MCF 10A (cell line): ENCODE measurements at regions of chr12 and their contacts with region 1.

Region 1: DNA sequence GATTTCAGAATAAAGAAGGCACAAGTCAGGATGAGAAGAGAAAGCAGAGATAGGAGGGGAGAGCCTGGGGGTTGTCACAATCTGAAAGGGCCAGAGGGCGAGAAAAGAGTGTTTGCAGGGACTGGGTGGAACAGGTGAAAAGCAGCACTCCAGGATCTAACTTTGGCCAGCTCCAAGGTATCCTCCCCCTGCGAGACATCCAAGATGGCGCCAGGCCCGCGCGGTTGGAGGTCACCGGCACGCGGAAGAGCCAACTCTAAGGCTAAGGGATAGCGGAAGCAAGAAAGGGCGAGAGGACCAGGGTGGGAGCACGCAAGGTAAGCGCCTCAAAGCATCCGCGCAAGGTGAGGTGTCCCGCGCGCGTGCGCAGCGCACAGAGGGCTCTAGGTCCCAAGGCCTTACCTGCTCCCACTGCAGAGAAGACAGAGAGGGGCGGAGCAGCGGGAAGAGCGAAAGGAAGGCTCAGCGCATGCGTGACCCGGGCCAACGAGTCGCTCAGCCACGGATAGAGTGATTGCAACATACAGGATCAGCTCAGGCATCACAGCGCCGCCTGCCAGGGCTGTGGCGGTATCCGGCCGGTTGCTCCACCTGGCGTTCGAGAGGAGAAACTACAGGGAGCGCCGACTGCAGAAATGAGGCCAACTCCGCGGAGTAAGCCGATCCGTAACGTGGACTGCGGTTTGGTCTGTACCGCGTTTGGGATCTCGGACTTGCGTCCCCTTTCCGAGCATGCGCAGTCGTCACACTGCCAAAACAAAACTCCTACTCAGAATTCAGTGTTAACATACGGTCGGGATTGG is at the start of gene ATP5MC2:
- DNase-seq: peak; percentile 98
- H3K4me3 Mint-ChIP-seq: peak within 1 kb of the TSS; percentile 83
- H3K27ac Mint-ChIP-seq: peak within 1 kb of the TSS; percentile 80
- H3K4me1 Mint-ChIP-seq: peaks cover 10% of the 10 kb centered on the region
- H3K27me3 Mint-ChIP-seq: peaks cover 12% of the 10 kb centered on the region
- CTCF ChIP-seq: peak; percentile 97
- total RNA-seq, gene ATP5MC2: 328 and 381 TPM in 2 replicates

Region 2: GRCh38 chr12:53500776-53501614 is 174.9 kb before region 1 on chr12 and contains the start of gene TARBP2:
- CTCF ChIA-PET with region 1: interaction called, 3 read pairs
- POLR2A ChIA-PET with region 1: interaction called, 11 read pairs
- intact Hi-C with region 1: no loop called
- DNase-seq: peak; percentile 99
- H3K4me3 Mint-ChIP-seq: peak within 1 kb of the TSS; percentile 80
- H3K27ac Mint-ChIP-seq: peak within 1 kb of the TSS; percentile 93
- H3K4me1 Mint-ChIP-seq: peaks cover 36% of the 10 kb centered on the region
- H3K27me3 Mint-ChIP-seq: no peaks in the 10 kb centered on the region
- CTCF ChIP-seq: no peak
- total RNA-seq, gene TARBP2: 26.4 and 27.8 TPM in 2 replicates

Region 3: DNA sequence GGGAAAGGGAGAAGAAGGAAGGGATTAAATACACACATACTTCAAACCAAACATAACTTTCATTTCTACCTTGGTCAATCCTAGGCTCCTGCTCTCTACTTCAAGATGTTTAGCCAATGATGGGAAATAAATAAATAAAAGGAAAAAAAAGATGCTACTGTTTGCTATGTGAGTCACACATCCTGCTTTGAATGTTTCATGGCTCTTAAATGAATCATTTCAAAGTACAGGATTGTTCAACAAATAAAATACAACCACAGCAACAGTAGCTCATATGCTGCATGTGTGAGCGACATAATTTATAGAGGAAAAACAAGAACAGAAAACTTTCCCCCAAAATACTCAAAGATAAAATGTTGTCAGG is 114.3 kb before region 1 on chr12:
- CTCF ChIA-PET with region 1: interaction called, 3 read pairs
- POLR2A ChIA-PET with region 1: interaction called, 10 read pairs
- intact Hi-C with region 1: no loop called
- DNase-seq: peak; percentile 83
- H3K4me3 Mint-ChIP-seq: peak overlapping the region; percentile 52
- H3K27ac Mint-ChIP-seq: peak overlapping the region; percentile 90
- H3K4me1 Mint-ChIP-seq: peaks cover 49% of the 10 kb centered on the region
- H3K27me3 Mint-ChIP-seq: no peaks in the 10 kb centered on the region
- CTCF ChIP-seq: no peak

Region 4: DNA sequence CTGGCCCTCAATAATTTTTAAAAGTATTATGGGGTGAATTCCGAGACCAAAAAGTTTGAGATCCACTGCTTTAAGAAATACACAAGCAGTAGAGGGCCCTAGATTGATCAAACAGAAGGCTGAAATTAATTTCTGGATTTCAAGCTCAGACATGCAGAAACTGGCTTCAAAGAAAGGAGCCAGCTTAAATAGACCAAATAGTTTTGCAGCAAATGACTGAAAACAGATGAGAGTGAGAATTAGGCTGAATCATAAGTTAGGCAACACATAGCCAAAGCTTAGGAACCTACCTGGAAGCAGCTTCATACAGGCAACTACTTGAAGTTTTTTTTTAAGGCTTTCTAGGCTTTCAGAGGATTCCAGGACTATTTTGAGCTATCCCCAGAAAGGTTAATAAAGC is 62.0 kb before region 1 on chr12:
- CTCF ChIA-PET with region 1: interaction called, 10 read pairs
- POLR2A ChIA-PET with region 1: interaction called, 25 read pairs
- intact Hi-C with region 1: no loop called
- DNase-seq: peak; percentile 58
- H3K4me3 Mint-ChIP-seq: no peak overlapping the region
- H3K27ac Mint-ChIP-seq: peak overlapping the region; percentile 74
- H3K4me1 Mint-ChIP-seq: peaks cover 17% of the 10 kb centered on the region
- H3K27me3 Mint-ChIP-seq: no peaks in the 10 kb centered on the region
- CTCF ChIP-seq: no peak

Region 5: GRCh38 chr12:53659011-53659551 is 16.8 kb before region 1 on chr12:
- CTCF ChIA-PET with region 1: interaction called, 5 read pairs
- POLR2A ChIA-PET with region 1: interaction called, 17 read pairs
- intact Hi-C with region 1: no loop called
- DNase-seq: peak; percentile 77
- H3K4me3 Mint-ChIP-seq: no peak overlapping the region
- H3K27ac Mint-ChIP-seq: peak overlapping the region; percentile 82
- H3K4me1 Mint-ChIP-seq: peaks cover 16% of the 10 kb centered on the region
- H3K27me3 Mint-ChIP-seq: no peaks in the 10 kb centered on the region
- CTCF ChIP-seq: no peak

Region 6: DNA sequence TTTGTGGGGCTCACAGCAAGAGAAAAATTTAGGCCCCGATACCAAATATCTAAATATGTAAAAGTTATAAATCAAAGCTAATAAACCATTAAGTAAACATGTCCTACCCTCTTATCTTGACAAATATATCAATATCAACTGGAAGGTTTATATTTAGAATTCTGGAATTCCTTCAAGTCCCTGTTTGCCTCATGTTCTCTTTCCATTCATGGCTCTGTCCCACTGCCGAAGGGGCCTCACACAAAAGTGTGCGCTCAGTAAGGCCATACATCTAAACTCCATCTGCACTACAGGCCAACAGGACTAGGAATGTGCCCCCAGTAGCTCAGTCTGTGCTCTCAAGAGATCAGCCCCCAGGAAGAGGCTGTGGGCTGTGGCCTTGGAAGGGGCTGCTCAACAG is 10.6 kb after region 1 on chr12:
- CTCF ChIA-PET with region 1: interaction called, 37 read pairs
- POLR2A ChIA-PET with region 1: interaction called, 5 read pairs
- intact Hi-C with region 1: no loop called
- DNase-seq: no peak
- H3K4me3 Mint-ChIP-seq: no peak overlapping the region
- H3K27ac Mint-ChIP-seq: no peak overlapping the region
- H3K4me1 Mint-ChIP-seq: no peaks in the 10 kb centered on the region
- H3K27me3 Mint-ChIP-seq: no peaks in the 10 kb centered on the region
- CTCF ChIP-seq: no peak

Region 7: DNA sequence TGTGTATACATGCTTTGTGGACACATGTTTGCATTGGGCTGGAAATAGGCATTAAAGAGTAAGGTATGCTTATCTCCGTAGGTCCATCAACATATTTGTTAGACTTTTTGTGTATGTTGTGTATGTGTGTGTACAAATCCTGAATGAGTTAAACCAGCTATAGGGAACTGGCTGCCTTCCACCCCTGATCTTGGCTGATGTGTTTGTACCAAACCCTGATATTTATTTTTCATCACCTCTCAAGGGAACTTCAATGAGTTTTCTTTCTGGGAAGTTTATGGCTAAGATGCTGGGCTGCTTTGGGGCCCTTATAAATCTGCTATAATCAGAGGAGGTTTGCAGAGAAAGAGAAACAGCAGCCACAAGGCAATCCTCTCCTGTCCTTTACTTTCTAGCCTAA is 113.0 kb after region 1 on chr12:
- CTCF ChIA-PET with region 1: no interaction called
- POLR2A ChIA-PET with region 1: no interaction called
- intact Hi-C with region 1: no loop called
- DNase-seq: no peak
- H3K4me3 Mint-ChIP-seq: no peak overlapping the region
- H3K27ac Mint-ChIP-seq: no peak overlapping the region
- H3K4me1 Mint-ChIP-seq: no peaks in the 10 kb centered on the region
- H3K27me3 Mint-ChIP-seq: no peaks in the 10 kb centered on the region
- CTCF ChIP-seq: no peak